Left cardiac atrium (tissue), 4 donors: ENCODE measurements at regions of chr7 and their contacts with region 1.

Region 1: DNA sequence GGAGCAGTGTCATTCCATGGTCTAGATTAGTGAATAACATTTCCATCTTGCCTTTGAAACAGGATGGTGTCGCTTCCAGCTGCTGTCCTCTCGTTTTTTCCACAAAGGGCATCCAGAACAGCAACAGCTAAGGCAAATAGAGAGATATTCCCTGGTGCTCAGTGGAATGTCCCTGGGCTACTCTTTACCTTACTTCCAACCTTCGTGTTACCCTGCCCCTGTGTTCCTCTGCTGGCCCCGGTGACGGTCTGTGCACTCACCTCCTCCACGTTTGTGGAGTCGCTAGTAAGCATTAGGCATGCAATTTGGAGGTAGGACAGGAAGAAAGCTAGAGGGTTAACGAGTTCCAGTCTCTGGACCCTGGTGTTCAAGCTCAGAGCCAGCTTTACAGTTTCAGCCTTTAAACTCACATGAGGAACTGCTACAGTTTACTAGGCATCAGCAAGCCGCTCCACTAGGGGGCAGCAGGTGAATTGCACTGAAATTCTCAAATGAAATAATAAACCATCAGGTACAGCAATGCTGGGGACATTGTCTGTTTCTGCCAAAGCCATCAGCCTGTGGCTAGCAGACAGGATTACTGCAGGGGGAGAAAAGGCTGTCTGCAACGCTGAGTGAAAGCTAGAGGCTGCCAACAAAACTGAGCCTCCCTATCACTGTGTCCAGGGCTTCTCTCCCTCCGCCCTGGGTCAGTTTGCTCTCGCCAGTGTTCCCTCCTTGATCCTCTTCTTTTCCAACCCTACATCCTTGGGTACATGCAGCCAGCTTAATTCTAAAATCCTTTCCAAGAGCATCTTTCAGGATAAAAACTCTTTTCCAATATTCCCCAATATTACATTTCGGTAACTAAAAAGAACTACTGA is 9.0 kb downstream of the MRPL32 start:
- DNase-seq: peak; percentile 84
- ATAC-seq: peak; percentile 59 to 63

Region 2: DNA sequence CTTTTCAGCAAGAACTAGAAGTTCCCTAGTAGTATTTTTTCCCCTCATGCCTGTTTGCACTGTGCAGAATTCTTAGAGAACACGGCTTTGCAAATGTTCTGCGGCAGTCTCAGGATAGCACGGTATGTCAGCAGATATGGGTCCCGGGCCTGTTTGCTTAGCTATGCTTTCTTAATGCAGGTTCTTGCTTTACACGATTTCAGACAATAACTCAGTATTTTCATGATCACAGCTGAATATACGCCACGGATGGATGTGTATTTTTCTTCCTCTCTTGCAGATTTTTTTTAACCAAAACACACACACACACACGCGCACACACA is 308.6 kb after region 1 on chr7:
- intact Hi-C with region 1: loop called in 1 of 2 experiments (anchors 5 kb)
- DNase-seq: no peak
- ATAC-seq: no peak

Region 3: GRCh38 chr7:43260980-43261878 is 320.0 kb after region 1 on chr7:
- intact Hi-C with region 1: loop called in 1 of 2 experiments (anchors 5 kb)
- DNase-seq: peak; percentile 71
- ATAC-seq: peak; percentile 63 to 77

Region 4: DNA sequence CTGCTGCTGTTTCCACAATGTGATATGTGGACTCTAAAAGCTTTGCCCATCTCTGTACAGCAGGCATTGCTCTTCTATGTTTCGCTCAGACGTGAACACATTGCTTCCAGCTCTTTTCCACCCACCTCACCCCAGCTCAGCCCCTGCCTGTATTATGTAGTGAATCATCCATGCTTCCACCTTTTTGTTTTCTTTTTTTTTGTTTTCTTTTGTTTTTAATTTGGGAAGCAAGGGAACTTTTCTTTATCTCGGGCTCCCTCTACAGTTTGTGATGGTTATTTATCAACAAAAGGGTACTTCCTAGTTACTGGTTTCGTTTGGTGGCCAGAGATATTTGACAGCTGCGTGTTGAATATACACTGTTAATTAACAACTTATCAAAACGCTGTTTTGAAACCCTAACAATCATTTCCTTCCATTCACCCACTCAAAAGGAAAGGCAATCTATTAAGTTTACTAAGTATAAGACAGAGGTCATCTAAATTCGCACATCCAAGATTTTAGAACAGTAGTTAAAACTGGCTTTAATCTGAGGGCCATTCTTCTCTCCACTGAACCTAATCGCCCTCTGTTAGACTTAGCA is 513.8 kb after region 1 on chr7:
- intact Hi-C with region 1: loop called in 1 of 2 experiments (anchors 10 kb)
- DNase-seq: no peak
- ATAC-seq: no peak

Region 5: DNA sequence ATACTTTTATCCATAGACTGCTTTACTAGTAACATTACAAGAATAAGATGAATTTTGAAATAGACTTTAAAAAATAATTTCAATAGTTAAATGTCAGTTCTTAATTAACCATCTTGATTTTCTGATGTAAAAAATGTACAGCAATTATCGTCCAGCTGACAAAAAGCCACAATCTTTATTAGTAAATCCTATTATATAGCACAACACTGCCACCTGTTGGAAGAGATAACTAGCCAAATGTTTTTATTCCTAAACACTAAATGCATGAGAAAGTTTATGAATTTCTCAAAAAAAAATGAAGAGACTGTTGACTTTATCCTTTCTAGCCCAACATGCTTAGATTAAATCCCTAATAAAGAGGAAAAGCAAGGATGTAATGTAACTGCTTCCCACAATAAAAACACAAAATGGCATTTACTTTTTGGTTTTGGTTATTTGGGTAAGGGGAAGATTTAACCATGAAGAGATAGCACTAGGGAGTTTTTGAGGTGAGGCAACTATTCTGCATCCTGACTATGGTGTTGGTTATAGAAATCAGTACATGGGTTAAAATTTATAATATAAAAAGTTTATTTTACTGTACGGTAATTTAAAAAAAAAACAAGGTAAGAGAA is 780.1 kb after region 1 on chr7:
- intact Hi-C with region 1: loop called in 1 of 2 experiments (anchors 5 kb)
- DNase-seq: no peak
- ATAC-seq: no peak

Region 6: GRCh38 chr7:43834463-43835251 is 893.4 kb after region 1 on chr7:
- intact Hi-C with region 1: loop called in 1 of 2 experiments (anchors 2 kb)
- DNase-seq: no peak
- ATAC-seq: no peak